CD4-positive, alpha-beta T cell (primary cell): ENCODE measurements at regions of chr3 and their contacts with region 1.

Region 1: DNA sequence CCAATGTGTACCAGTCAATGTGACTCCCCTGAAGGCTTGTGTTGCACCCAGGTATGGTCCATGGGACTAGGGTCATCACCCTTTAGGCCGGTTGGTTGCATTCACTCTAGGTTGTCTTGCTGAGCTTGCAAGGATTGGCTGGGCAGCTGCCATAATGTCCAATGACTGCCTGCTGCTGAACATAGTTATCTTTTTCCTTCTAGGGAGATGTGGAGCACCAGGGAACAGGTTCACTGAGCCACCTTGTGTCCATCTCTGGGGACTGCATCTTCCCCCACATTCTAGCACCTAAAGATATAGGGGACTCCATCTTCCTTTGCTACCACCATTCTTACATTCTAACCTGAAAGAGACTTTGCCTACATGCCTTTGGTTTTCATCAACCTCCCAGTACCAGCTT is 580.4 kb upstream of the TBL1XR1 start:
- DNase-seq: peak in 10 of 14 experiments; percentile 7 to 58 (median 22)
- ATAC-seq: peak; percentile 55
- H3K4me3 ChIP-seq: no peak overlapping the region
- H3K4me3 Mint-ChIP-seq: no peak overlapping the region
- H3K27ac ChIP-seq: no peak overlapping the region
- H3K27ac Mint-ChIP-seq: no peak overlapping the region
- H3K4me1 ChIP-seq: peaks cover 16% of the 10 kb centered on the region
- H3K4me1 Mint-ChIP-seq: peaks cover 20% of the 10 kb centered on the region
- H3K27me3 ChIP-seq: no peaks in the 10 kb centered on the region
- H3K27me3 Mint-ChIP-seq: no peaks in the 10 kb centered on the region
- CTCF ChIP-seq: peak; percentile 35

Region 2: GRCh38 chr3:176879710-176880109 is 898.0 kb before region 1 on chr3:
- CTCF ChIA-PET with region 1: no interaction called
- POLR2A ChIA-PET with region 1: no interaction called
- intact Hi-C with region 1: loop called in 1 of 2 experiments (anchors 5 kb)
- DNase-seq: no peak
- ATAC-seq: no peak
- H3K4me3 ChIP-seq: no peak overlapping the region
- H3K4me3 Mint-ChIP-seq: no peak overlapping the region
- H3K27ac ChIP-seq: no peak overlapping the region
- H3K27ac Mint-ChIP-seq: no peak overlapping the region
- H3K4me1 ChIP-seq: no peaks in the 10 kb centered on the region
- H3K4me1 Mint-ChIP-seq: no peaks in the 10 kb centered on the region
- H3K27me3 ChIP-seq: peaks cover 3 to 7% of the 10 kb centered on the region in 2 experiments
- H3K27me3 Mint-ChIP-seq: peaks cover 17% of the 10 kb centered on the region
- CTCF ChIP-seq: no peak

Region 3: DNA sequence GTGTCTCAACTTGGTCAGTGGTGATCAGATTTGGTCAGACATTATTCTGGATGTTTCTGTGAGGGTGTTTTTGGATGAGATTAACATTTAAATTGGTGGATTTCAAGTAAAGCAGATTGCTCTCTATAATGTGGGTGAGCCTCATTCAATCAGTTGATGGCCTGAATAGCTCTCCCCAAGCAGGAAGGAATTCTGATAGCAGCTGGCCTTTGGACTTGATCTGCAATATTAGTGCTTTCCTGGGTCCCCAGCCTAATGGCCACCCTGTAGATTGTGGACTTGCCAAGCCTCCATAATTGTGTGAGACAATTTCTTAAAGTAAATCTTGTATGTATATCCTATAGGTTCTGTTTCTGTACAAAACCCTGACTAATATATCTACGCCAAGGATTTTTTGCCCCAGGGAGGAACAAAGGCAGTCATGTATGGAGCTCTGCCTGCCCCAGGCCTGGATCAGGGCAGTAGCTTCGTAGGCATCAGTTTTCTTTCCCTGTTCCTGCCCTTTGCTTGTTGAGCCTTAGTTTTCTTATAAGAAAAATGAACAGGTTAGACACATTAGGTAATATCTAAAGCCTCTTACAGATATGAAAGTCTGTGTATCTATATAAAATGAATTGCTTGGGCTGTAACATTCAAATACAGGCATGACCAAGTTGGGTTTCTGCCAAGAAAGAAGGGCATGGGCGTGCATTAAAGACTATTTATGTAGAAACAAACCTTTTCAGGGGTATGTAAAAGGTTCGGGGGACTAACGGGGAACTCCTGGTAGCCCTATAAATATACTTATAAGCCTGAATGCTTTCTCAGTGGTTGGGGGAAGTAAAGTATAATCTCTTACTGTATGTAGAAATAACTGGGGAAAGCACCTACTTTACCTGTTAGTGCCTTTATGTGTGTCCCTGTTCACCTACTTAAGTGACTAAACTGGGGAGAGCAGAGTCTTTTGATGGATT is 426.2 kb before region 1 on chr3:
- CTCF ChIA-PET with region 1: no interaction called
- POLR2A ChIA-PET with region 1: no interaction called
- intact Hi-C with region 1: no loop called
- DNase-seq: no peak
- ATAC-seq: no peak
- H3K4me3 ChIP-seq: no peak overlapping the region
- H3K4me3 Mint-ChIP-seq: no peak overlapping the region
- H3K27ac ChIP-seq: no peak overlapping the region
- H3K27ac Mint-ChIP-seq: no peak overlapping the region
- H3K4me1 ChIP-seq: no peaks in the 10 kb centered on the region
- H3K4me1 Mint-ChIP-seq: peaks cover 14% of the 10 kb centered on the region
- H3K27me3 ChIP-seq: no peaks in the 10 kb centered on the region
- H3K27me3 Mint-ChIP-seq: no peaks in the 10 kb centered on the region
- CTCF ChIP-seq: no peak

Region 4: GRCh38 chr3:177705976-177706823 is 71.5 kb before region 1 on chr3:
- CTCF ChIA-PET with region 1: no interaction called
- POLR2A ChIA-PET with region 1: no interaction called
- intact Hi-C with region 1: no loop called
- DNase-seq: no peak
- ATAC-seq: no peak
- H3K4me3 ChIP-seq: no peak overlapping the region
- H3K4me3 Mint-ChIP-seq: no peak overlapping the region
- H3K27ac ChIP-seq: no peak overlapping the region
- H3K27ac Mint-ChIP-seq: no peak overlapping the region
- H3K4me1 ChIP-seq: no peaks in the 10 kb centered on the region
- H3K4me1 Mint-ChIP-seq: no peaks in the 10 kb centered on the region
- H3K27me3 ChIP-seq: no peaks in the 10 kb centered on the region
- H3K27me3 Mint-ChIP-seq: no peaks in the 10 kb centered on the region
- CTCF ChIP-seq: no peak